A549 (cell line): ENCODE measurements at regions of chr14 and their contacts with region 1.

Region 1: GRCh38 chr14:89013084-89013504 is 188.6 kb downstream of the TTC8 start:
- DNase-seq: peak; percentile 60 to 87
- ATAC-seq: peak; percentile 83 to 91
- H3K4me3 ChIP-seq: peak overlapping the region; percentile 31
- H3K27ac ChIP-seq: peak overlapping the region; percentile 49 to 71; a peak in 4 of 6 replicates
- H3K4me1 ChIP-seq: peaks cover 9% of the 10 kb centered on the region
- CTCF ChIP-seq: peak; percentile 47; the same call in 2 of the 3 replicates
- EP300 ChIP-seq: no peak
- POLR2A ChIP-seq: no peak
- RAD21 ChIP-seq: peak; percentile 72 to 82

Region 2: DNA sequence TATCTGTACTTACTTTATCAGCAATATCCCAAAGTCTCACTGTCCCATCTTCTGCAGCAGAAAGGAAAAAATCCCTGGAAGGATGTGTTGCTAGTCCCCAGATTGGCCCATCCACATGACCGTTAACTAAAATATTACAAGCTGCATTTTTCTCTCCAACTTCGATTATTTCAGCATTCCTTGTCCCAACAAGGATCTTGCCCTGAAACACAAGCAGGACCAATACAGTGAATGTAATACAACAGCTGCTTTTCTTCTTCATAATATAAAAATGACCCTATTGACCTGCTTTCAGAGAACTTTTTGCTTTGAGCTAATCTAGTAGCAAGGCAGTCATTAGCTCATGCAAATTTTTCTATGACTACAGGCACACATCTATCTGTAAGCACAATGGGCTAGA is 392.0 kb before region 1 on chr14:
- CTCF ChIA-PET with region 1: no interaction called
- POLR2A ChIA-PET with region 1: no interaction called
- DNase-seq: no peak
- ATAC-seq: no peak
- H3K4me3 ChIP-seq: no peak overlapping the region
- H3K27ac ChIP-seq: no peak overlapping the region
- H3K4me1 ChIP-seq: no peaks in the 10 kb centered on the region
- CTCF ChIP-seq: no peak
- EP300 ChIP-seq: no peak
- POLR2A ChIP-seq: no peak
- RAD21 ChIP-seq: no peak

Region 3: GRCh38 chr14:89000007-89000942 is 12.8 kb before region 1 on chr14:
- CTCF ChIA-PET with region 1: interaction called, 12 read pairs
- POLR2A ChIA-PET with region 1: no interaction called
- DNase-seq: peak; percentile 81 to 96
- ATAC-seq: peak; percentile 92 to 94
- H3K4me3 ChIP-seq: no peak overlapping the region
- H3K27ac ChIP-seq: peak overlapping the region; percentile 93 to 96
- H3K4me1 ChIP-seq: peaks cover 36% of the 10 kb centered on the region
- CTCF ChIP-seq: no peak
- EP300 ChIP-seq: peak; percentile 82 to 86; a peak in 3 of 5 replicates
- POLR2A ChIP-seq: no peak
- RAD21 ChIP-seq: peak in 1 of 2 experiments; percentile 24; a peak in 1 of 5 replicates

Region 4: DNA sequence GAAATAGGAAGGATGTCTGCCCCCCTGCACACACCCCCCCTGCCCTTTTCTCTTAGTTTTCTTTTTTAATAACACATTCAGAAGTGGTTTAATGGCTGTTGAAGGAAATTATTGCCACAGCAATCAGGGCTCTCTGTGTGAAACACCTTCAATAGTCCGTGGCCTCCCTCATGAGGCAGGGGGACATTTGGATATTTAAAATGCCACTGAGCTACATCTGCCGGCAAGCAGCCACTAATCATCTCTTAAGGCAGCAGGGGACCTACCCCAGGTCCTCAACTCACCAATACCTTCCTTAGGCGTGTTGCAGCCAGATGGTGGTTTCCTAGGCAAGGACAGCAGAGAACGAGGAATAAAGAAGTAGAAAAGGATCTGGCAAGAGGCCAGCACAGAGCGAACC is 94.5 kb after region 1 on chr14:
- CTCF ChIA-PET with region 1: no interaction called
- POLR2A ChIA-PET with region 1: no interaction called
- DNase-seq: no peak
- ATAC-seq: no peak
- H3K4me3 ChIP-seq: no peak overlapping the region
- H3K27ac ChIP-seq: no peak overlapping the region
- H3K4me1 ChIP-seq: no peaks in the 10 kb centered on the region
- CTCF ChIP-seq: no peak
- EP300 ChIP-seq: no peak
- POLR2A ChIP-seq: no peak
- RAD21 ChIP-seq: no peak